AG04449 (cell line): ENCODE measurements at regions of chr5 and their contacts with region 1.

Region 1: DNA sequence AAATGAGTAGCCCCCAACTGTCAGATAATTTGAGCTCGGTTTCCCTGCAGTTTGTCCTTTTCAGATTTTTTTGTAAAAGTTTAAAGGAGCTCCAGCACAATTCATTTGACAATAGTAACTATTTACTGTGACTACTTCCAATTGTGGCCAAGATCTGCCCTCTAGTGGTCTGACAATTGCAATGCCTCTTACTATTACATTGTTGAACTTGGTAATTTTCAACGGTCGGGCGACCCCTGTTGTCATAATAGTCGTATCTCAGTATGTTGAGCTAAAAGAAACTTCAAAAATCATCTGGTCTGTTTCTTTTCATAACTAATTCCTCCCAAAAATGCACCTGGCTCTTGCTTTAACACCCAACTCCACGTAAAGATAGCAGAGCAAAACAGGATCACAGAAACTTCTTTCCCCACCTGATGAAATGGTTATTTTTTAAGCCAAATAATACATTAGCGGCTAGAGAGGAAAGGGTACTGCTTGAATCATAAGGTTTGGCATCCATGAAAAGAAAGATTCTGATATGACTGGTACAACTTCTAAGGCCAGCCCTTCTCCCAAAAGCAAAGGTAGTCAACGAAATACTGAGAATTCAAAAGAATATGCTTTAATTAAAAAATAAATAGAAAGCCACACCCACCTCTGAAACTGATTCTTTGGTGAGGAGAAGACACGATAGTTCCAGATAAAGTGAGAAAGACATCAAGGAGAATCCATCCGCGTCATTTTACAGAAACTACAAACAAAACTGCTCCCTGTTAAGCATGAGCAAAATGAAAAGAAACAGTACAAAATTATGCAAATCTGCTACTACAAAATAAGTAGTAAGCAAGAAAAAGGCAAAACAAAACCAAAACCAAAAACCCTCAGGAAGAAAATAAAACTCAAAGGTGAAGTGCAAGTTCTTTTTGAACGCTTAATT is 76.9 kb upstream of the HTR4 start:
- DNase-seq: peak; percentile 38
- H3K4me3 ChIP-seq: no peak overlapping the region
- CTCF ChIP-seq: peak; percentile 75

Region 2: GRCh38 chr5:147949711-147950573 is 781.3 kb before region 1 on chr5:
- CTCF ChIA-PET with region 1: interaction called, 18 read pairs
- POLR2A ChIA-PET with region 1: no interaction called
- DNase-seq: peak; percentile 10
- H3K4me3 ChIP-seq: no peak overlapping the region
- CTCF ChIP-seq: peak; percentile 46

Region 3: DNA sequence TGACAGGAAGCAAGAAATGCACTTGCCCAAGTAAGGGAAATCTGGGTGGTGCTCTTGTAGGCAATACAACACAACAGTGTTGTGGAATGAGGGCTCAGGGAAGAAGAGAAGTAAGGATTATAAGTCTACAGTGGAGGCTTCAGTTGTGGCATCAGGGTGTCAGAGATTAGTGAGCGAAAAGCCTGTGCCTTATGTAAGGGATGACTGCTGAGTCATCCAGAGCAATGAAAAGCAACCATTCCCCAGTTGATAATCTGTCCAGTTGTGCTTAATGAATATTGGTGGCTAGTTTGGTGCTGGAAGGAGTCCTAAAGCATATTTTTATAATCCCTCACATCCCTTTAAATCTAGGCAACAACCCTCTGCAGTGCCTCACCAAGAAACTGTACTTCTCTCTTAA is 305.4 kb before region 1 on chr5:
- CTCF ChIA-PET with region 1: interaction called, 34 read pairs
- POLR2A ChIA-PET with region 1: no interaction called
- DNase-seq: no peak
- H3K4me3 ChIP-seq: no peak overlapping the region
- CTCF ChIP-seq: no peak

Region 4: DNA sequence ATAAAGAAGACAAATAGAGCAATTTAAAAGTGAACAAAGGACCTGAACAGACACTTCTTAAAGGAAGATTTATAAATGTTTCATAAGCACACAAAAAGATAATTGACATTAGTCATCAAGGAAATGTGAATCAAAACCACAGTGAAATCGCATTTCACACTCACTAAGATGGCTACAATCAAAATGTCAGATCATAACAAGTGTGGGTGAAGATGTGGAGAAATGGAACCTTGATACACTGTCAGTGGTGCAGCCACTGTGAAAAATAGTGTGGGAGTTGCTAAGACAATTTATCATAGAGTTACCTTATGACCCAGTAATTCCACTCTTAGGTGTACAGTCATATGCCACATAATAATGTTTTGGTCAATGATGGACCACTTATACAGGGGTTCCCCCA is 22.3 kb before region 1 on chr5:
- CTCF ChIA-PET with region 1: interaction called, 22 read pairs
- POLR2A ChIA-PET with region 1: no interaction called
- DNase-seq: no peak
- H3K4me3 ChIP-seq: no peak overlapping the region
- CTCF ChIP-seq: no peak

Region 5: GRCh38 chr5:148988328-148988727 is 257.1 kb after region 1 on chr5:
- CTCF ChIA-PET with region 1: interaction called, 24 read pairs
- POLR2A ChIA-PET with region 1: no interaction called
- DNase-seq: no peak
- H3K4me3 ChIP-seq: no peak overlapping the region
- CTCF ChIP-seq: no peak

Region 6: GRCh38 chr5:149053072-149053695 is 322.0 kb after region 1 on chr5:
- CTCF ChIA-PET with region 1: interaction called, 11 read pairs
- POLR2A ChIA-PET with region 1: no interaction called
- DNase-seq: no peak
- H3K4me3 ChIP-seq: no peak overlapping the region
- CTCF ChIP-seq: no peak